ENCODE measurements at regions of chr4 and their contacts with region 1.

Region 1: DNA sequence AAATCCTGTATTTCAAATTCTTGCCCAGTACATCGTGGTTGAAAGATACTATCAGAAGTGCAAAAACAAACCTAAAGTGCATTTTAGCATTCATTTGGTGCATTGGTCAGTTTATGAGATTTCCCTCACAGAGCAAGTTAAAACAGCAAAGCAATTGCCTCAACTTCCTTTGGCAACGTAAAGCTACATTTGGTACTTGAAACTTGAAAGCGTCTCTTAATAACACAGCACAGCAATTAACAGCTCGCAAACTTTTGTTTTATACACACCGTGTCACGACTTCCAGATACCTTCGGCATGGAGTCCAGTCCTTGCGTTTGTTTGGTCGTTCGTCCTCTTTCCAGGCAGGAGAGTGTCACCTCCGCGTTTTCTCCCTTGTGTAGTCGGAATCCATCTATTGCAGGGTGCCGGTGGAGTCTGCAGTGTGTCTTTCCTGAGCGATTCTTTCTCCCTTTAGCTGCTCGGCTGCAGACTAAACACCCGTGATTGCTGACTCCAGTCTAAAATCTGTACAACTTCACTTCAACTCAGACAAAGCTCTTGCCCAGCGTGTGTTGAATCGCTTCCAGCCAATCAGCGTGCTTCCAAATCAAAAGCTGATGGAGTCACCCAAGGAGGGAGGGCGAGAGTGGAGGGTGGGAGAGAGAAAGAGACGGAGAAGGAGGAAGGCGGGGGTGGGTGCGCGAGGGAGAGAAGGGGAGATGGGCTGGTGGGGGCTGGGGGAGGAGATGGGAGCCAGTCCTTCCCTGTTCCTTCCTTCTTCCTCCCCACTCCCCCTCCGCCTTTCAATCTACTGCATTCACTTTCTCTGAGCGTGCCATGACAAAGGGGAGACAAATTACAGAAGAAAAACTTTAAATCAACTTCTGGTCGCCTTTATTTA is at the start of gene PCDH18:
- DNase-seq: peak; percentile 75
- ATAC-seq: peak; percentile 75
- H3K4me3 ChIP-seq: peak within 1 kb of the TSS; percentile 97
- H3K27ac ChIP-seq: peak within 1 kb of the TSS; percentile 17; the same call in 1 of the 2 replicates
- H3K4me1 ChIP-seq: peaks cover 14% of the 10 kb centered on the region; the same call in 1 of the 2 replicates
- H3K27me3 ChIP-seq: no peaks in the 10 kb centered on the region
- CTCF ChIP-seq: no peak
- total RNA-seq, gene PCDH18: 1.6 and 2.0 TPM in 2 replicates

Region 2: GRCh38 chr4:136768926-136769275 is 763.3 kb before region 1 on chr4:
- CTCF ChIA-PET with region 1: no interaction called
- POLR2A ChIA-PET with region 1: no interaction called
- intact Hi-C with region 1: no loop called
- DNase-seq: no peak
- ATAC-seq: no peak
- H3K4me3 ChIP-seq: no peak overlapping the region
- H3K27ac ChIP-seq: no peak overlapping the region
- H3K4me1 ChIP-seq: no peaks in the 10 kb centered on the region
- H3K27me3 ChIP-seq: no peaks in the 10 kb centered on the region
- CTCF ChIP-seq: no peak

Region 3: DNA sequence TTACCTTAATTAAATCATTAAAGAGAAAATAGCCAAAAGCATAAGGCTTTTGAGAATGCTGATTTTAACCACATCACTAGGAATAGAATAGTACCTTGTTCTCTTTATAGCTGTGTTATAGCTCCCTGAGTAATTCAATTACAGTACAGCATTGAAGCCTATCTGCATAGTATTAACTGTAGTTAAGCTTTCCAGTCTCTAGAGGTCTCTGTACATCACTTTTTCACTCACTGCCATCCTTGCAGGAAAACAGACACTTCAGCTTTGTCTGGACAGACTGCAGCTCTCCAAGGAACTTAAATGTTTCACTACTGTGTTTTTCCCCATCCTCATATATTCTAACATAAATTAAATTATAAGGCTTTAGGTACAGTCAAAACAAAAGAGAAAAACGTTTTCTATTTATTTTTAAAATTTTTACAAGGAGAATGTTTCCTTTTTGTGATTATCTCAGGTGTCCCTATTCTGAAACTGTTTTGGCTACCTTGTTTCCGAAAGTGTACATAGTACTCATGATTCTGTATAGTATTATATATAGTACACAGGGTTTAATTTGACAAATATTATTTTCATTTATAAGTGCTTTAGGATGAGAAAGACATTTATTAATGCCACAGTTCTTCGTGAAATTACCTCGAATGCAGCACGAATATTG is 407.8 kb before region 1 on chr4:
- CTCF ChIA-PET with region 1: interaction called, 3 read pairs
- POLR2A ChIA-PET with region 1: no interaction called
- intact Hi-C with region 1: loop called (anchors 10 kb)
- DNase-seq: peak; percentile 68
- ATAC-seq: peak; percentile 99
- H3K4me3 ChIP-seq: peak overlapping the region; percentile 85
- H3K27ac ChIP-seq: peak overlapping the region; percentile 17; the same call in 1 of the 2 replicates
- H3K4me1 ChIP-seq: peaks cover 8% of the 10 kb centered on the region; the same call in 1 of the 2 replicates
- H3K27me3 ChIP-seq: no peaks in the 10 kb centered on the region
- CTCF ChIP-seq: peak; percentile 68

Region 4: DNA sequence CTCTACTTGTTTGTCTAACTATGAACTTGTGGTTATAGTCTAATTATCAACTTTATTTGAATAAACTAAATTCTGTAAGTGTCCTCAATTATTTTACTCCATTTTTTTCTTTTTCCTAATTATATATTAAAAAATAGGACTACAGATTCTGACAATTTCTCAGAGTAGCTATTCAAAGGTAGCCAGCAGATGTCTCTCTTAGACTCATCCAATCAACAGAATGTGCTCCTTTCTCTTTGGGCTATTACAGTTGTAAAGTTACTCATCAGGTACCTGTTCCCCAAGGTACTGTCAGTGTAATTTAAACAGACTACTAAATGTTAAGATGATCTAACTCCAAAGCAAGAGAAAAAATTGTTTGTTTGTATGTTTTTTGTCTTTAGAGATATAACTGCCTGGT is 248.5 kb before region 1 on chr4:
- CTCF ChIA-PET with region 1: no interaction called
- POLR2A ChIA-PET with region 1: no interaction called
- intact Hi-C with region 1: loop called (anchors 1 kb)
- DNase-seq: peak; percentile 49
- ATAC-seq: peak; percentile 54; the same call in 1 of the 2 replicates
- H3K4me3 ChIP-seq: no peak overlapping the region
- H3K27ac ChIP-seq: no peak overlapping the region
- H3K4me1 ChIP-seq: no peaks in the 10 kb centered on the region
- H3K27me3 ChIP-seq: no peaks in the 10 kb centered on the region
- CTCF ChIP-seq: peak; percentile 50

Region 5: DNA sequence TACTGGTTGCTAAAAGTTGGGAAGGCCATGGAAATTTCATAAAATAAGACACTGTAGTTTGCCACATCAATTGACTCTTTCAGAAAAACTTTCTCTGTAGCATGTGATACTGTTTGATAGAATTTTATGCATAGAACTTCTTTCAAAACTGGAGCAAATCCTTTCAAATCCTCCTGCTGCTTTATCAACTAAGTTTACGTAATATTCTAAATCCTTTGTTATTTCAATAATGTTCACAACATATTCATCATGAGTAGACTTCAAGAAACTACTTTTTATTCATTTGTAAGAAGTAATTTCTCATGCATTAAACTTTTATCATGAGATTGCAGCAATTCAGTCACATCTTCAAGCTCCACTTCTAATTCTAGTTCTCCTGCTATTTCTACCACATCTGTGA is 199.2 kb before region 1 on chr4:
- CTCF ChIA-PET with region 1: no interaction called
- POLR2A ChIA-PET with region 1: no interaction called
- intact Hi-C with region 1: no loop called
- DNase-seq: no peak
- ATAC-seq: no peak
- H3K4me3 ChIP-seq: no peak overlapping the region
- H3K27ac ChIP-seq: no peak overlapping the region
- H3K4me1 ChIP-seq: no peaks in the 10 kb centered on the region
- H3K27me3 ChIP-seq: no peaks in the 10 kb centered on the region
- CTCF ChIP-seq: no peak

Region 6: DNA sequence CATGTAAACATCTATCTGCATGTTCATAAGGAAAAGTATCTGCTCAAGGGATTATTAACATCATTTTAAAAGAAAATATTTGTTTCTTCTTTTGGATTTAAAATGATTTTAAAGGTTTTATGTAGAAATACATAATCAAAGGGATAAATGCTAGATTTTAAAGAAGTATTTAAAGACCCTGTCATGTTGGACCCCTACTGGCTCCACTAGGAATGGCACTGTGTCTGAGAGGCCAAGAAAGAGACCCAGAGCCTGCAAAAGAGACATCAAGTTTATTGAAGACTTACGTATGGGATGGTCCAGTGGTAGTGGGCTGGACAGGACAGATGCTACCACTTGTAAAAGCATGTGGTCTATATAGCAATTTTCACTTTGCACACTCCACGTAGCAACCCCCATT is 78.7 kb after region 1 on chr4:
- CTCF ChIA-PET with region 1: no interaction called
- POLR2A ChIA-PET with region 1: no interaction called
- intact Hi-C with region 1: loop called (anchors 5 kb)
- DNase-seq: peak; percentile 49
- ATAC-seq: no peak
- H3K4me3 ChIP-seq: no peak overlapping the region
- H3K27ac ChIP-seq: no peak overlapping the region
- H3K4me1 ChIP-seq: peaks cover 22% of the 10 kb centered on the region
- H3K27me3 ChIP-seq: no peaks in the 10 kb centered on the region
- CTCF ChIP-seq: peak; percentile 56

Region 7: GRCh38 chr4:137800861-137801260 is 268.6 kb after region 1 on chr4:
- CTCF ChIA-PET with region 1: no interaction called
- POLR2A ChIA-PET with region 1: no interaction called
- intact Hi-C with region 1: loop called (anchors 10 kb)
- DNase-seq: no peak
- ATAC-seq: no peak
- H3K4me3 ChIP-seq: no peak overlapping the region
- H3K27ac ChIP-seq: no peak overlapping the region
- H3K4me1 ChIP-seq: peaks cover 22% of the 10 kb centered on the region
- H3K27me3 ChIP-seq: no peaks in the 10 kb centered on the region
- CTCF ChIP-seq: no peak